CD8-positive, alpha-beta T cell (primary cell): ENCODE measurements at regions of chr17 and their contacts with region 1.

Region 1: DNA sequence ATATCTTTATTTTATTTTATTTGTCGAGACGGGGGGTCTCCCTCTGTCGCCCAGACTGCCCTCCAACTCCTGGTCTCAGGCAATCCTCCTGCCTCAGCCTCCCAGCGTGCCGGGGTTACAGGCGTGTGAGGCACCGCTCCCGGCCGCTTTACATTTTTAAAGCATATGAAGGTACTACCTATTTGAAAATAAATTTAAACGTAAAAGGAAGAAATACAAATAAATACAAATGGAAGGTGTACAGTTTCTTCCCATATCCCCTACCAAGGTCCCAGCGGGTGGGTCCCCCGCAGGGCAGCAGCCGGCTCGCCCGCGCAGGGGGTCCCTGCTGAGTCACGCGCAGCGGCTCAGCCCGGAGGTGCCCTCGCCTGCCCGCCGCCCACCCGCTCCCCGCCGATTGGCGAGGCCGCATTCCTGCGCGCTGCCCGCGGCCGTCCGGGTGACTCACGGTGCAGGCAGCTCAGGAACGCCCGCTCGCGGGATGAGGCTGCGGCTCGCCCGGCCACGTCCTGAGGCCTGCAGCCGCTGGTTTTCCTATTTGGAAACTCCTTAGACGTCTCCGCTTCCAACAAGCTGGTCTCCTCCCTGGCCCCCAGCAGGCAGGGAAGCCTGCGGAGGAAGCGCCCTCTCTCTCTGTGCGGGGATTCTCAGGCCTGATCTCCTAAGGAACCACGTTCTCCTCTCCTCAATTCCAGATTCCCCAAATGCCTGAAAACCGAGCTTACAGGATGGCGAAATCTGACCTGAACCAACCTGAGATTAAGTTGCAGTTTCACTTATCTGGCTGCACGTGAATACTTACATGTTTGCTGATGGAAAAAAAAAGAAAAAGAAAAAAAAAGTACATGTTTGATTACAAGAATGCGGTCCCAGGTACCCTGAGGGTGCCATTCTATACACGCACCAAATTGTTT is 54.9 kb upstream of the MAP3K14 start:
- DNase-seq: peak in 2 of 9 experiments; percentile 18 to 30
- ATAC-seq: peak; percentile 34
- H3K4me3 ChIP-seq: no peak overlapping the region
- H3K4me3 Mint-ChIP-seq: peak overlapping the region; percentile 66
- H3K27ac ChIP-seq: no peak overlapping the region
- H3K27ac Mint-ChIP-seq: no peak overlapping the region
- H3K4me1 ChIP-seq: peaks cover 8% of the 10 kb centered on the region
- H3K4me1 Mint-ChIP-seq: peaks cover 3% of the 10 kb centered on the region
- H3K27me3 ChIP-seq: peaks cover 0 to 2% of the 10 kb centered on the region in 2 experiments
- H3K27me3 Mint-ChIP-seq: peaks cover 14% of the 10 kb centered on the region
- CTCF ChIP-seq: no peak

Region 2: GRCh38 chr17:45332989-45333701 is 38.5 kb before region 1 on chr17:
- CTCF ChIA-PET with region 1: no interaction called
- POLR2A ChIA-PET with region 1: no interaction called
- intact Hi-C with region 1: loop called in 1 of 2 experiments (anchors 5 kb)
- DNase-seq: no peak
- ATAC-seq: no peak
- H3K4me3 ChIP-seq: no peak overlapping the region
- H3K4me3 Mint-ChIP-seq: no peak overlapping the region
- H3K27ac ChIP-seq: no peak overlapping the region
- H3K27ac Mint-ChIP-seq: no peak overlapping the region
- H3K4me1 ChIP-seq: no peaks in the 10 kb centered on the region
- H3K4me1 Mint-ChIP-seq: peaks cover 6% of the 10 kb centered on the region
- H3K27me3 ChIP-seq: no peaks in the 10 kb centered on the region
- H3K27me3 Mint-ChIP-seq: no peaks in the 10 kb centered on the region
- CTCF ChIP-seq: no peak